ENCODE measurements at regions of chr5 and their contacts with region 1.

Region 1: GRCh38 chr5:119370486-119370885 is 14.7 kb downstream of the TNFAIP8 start:
- DNase-seq: no peak
- H3K4me3 ChIP-seq: no peak overlapping the region
- H3K27ac ChIP-seq: no peak overlapping the region
- H3K27me3 ChIP-seq: no peaks in the 10 kb centered on the region
- CTCF ChIP-seq: no peak

Region 2: GRCh38 chr5:119049824-119050449 is 320.5 kb before region 1 on chr5:
- CTCF ChIA-PET with region 1: no interaction called
- POLR2A ChIA-PET with region 1: interaction called, 12 read pairs
- DNase-seq: no peak
- H3K4me3 ChIP-seq: no peak overlapping the region
- H3K27ac ChIP-seq: peak overlapping the region; percentile 61
- H3K27me3 ChIP-seq: no peaks in the 10 kb centered on the region
- CTCF ChIP-seq: no peak

Region 3: DNA sequence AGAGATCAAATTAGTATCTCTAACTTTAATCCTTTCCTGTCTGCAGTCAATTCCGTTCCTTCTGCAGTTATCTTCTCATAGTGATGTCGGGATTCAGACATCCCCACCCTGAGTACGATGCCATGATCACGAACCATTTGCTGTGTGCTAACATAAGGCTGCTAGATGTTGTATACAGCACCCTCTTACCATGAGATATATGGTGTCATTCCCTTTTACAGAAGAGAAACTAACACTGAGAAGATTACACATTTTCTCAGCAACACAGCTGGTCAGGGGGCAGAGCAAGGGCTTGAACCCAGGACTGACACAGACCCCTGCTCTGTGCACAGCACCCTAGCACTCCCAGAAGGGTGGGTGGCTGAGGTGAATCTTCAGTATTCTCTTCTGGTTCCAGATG is 34.9 kb after region 1 on chr5:
- CTCF ChIA-PET with region 1: no interaction called
- POLR2A ChIA-PET with region 1: no interaction called
- DNase-seq: no peak
- H3K4me3 ChIP-seq: no peak overlapping the region
- H3K27ac ChIP-seq: no peak overlapping the region
- H3K27me3 ChIP-seq: no peaks in the 10 kb centered on the region
- CTCF ChIP-seq: no peak

Measured in AG04450 (cell line).